Pancreas (tissue), 10 donors: ENCODE measurements at regions of chr10 and their contacts with region 1.

Region 1: GRCh38 chr10:122051251-122051996 is 62.5 kb downstream of the TACC2 start:
- DNase-seq: peak in 4 of 6 donors; percentile 45 to 63 (median 55)
- ATAC-seq: peak; percentile 64 to 88 (median 80)
- H3K4me3 ChIP-seq: no peak overlapping the region
- H3K27ac ChIP-seq: no peak overlapping the region
- H3K4me1 ChIP-seq: no peaks in the 10 kb centered on the region
- H3K27me3 ChIP-seq: no peaks in the 10 kb centered on the region
- CTCF ChIP-seq: peak; percentile 45 to 64 (median 50)

Region 2: GRCh38 chr10:121927841-121928527 is 123.4 kb before region 1 on chr10 and contains the start of gene ATE1:
- intact Hi-C with region 1: loop called in 1 of 3 experiments (anchors 10 kb)
- DNase-seq: peak; percentile 88 to 95 (median 92)
- ATAC-seq: peak; percentile 93 to 97 (median 96)
- H3K4me3 ChIP-seq: peak within 1 kb of the TSS; percentile 88 to 100 (median 98)
- H3K27ac ChIP-seq: peak within 1 kb of the TSS; percentile 95 to 99 (median 98)
- H3K4me1 ChIP-seq: peaks cover 3 to 13% (median 10%) of the 10 kb centered on the region in 3 donors
- H3K27me3 ChIP-seq: no peaks in the 10 kb centered on the region
- CTCF ChIP-seq: no peak
- total RNA-seq, gene ATE1: 7.4 to 15.4 (median 10.4) TPM

Region 3: GRCh38 chr10:123241391-123242141 is 1190.1 kb after region 1 on chr10:
- intact Hi-C with region 1: no loop called
- DNase-seq: no peak
- ATAC-seq: no peak
- H3K4me3 ChIP-seq: no peak overlapping the region
- H3K27ac ChIP-seq: no peak overlapping the region
- H3K4me1 ChIP-seq: no peaks in the 10 kb centered on the region
- H3K27me3 ChIP-seq: no peaks in the 10 kb centered on the region
- CTCF ChIP-seq: no peak